A673 (cell line): ENCODE measurements at regions of chr1 and their contacts with region 1.

Region 1: DNA sequence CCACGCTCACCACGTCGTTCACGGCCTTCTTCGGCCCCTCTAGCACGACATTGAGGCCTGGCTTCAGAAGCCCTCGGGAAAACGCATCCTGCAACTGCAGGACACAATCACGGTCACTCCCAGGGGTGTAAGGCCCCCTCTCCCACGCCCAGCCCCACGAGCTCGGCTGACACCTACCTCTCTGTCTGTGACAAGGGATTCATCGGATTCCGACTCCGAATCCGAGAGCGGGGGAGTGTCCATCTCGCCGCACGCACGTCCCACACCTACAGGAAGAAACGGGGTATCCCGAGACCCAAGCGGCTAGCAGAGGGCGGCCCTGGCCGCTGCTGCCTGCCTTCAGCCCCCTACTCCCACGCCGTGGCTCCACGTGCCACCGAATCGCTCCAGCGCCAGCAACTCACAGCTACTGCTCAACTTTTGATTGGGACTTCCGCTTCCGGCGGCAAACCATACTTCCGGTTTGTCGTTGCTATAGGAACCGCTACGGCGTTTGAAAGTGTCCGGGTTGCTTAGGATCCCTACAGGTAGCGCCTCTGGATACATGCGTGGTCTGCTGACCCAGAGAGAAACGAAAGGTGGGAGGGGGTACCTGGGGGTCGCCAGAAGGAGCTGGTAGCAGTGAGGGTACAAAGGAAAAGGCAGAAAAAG is at the starts of genes CFAP57 and EBNA1BP2:
- DNase-seq: peak; percentile 96
- H3K4me3 ChIP-seq: peak within 1 kb of the TSS; percentile 89
- H3K27ac ChIP-seq: peak within 1 kb of the TSS; percentile 83
- H3K4me1 ChIP-seq: peaks cover 8% of the 10 kb centered on the region
- H3K27me3 ChIP-seq: no peaks in the 10 kb centered on the region
- CTCF ChIP-seq: no peak
- total RNA-seq, gene CFAP57: 0.20 and 0.73 TPM in 2 replicates
- total RNA-seq, gene EBNA1BP2: 145 and 169 TPM in 2 replicates

Region 2: GRCh38 chr1:43035821-43036741 is 135.9 kb before region 1 on chr1:
- CTCF ChIA-PET with region 1: no interaction called
- POLR2A ChIA-PET with region 1: no interaction called
- intact Hi-C with region 1: no loop called
- DNase-seq: no peak
- H3K4me3 ChIP-seq: no peak overlapping the region
- H3K27ac ChIP-seq: no peak overlapping the region
- H3K4me1 ChIP-seq: peaks cover 12% of the 10 kb centered on the region
- H3K27me3 ChIP-seq: no peaks in the 10 kb centered on the region
- CTCF ChIP-seq: no peak

Region 3: DNA sequence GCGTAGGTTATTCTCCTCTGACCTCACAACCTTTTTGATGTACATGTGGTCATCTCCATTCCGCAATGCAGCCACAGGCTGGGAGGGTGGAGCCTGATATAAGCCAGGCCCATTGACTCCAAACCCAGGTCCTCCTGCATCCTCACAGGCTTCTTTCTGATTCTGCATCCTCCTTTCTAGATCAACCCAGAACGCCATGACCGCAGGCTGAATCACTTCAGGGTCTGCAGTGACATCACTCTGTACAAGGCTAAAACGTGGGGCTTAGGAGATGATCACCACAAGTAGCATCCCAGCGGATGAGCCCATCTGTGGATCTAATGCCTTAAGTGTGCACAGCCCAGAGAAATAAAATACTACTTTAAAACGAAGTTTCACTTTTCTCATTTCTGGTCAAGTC is 16.0 kb before region 1 on chr1:
- CTCF ChIA-PET with region 1: no interaction called
- POLR2A ChIA-PET with region 1: interaction called, 10 read pairs
- intact Hi-C with region 1: no loop called
- DNase-seq: no peak
- H3K4me3 ChIP-seq: no peak overlapping the region
- H3K27ac ChIP-seq: no peak overlapping the region
- H3K4me1 ChIP-seq: no peaks in the 10 kb centered on the region
- H3K27me3 ChIP-seq: no peaks in the 10 kb centered on the region
- CTCF ChIP-seq: no peak